ENCODE measurements at regions of chr5 and their contacts with region 1.

Region 1: DNA sequence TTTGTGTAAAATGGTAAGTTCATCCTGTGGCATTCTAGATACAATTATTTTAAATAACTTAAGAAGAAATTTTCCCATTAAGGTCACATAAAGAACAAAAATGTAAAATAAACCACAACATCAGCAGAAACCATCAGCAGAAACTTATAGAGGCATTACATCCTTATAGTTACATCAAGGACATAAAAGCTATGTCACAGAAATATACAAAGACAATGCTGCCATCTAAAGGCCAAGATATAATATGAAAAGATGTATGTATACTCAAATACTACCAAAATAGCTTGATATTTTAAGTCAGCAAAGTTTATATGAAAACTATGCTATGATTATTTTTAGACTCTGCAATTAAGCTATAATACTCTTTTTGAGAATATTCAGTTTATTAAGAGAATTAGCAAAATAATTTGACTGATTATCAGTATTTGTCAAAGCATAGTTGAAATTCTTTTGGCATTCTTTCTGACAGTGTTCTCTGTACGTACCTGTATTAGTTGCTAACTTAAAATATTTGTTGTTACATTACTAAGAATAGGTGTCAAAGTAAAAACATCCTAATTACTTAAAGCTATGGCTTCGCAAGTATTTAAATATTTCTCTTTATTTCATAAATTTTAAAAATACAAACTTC is 36.2 kb downstream of the FBXL17 start:
- DNase-seq: peak in 1 of 2 experiments; percentile 51
- H3K4me3 ChIP-seq: no peak overlapping the region
- H3K27ac ChIP-seq: no peak overlapping the region
- H3K4me1 ChIP-seq: no peaks in the 10 kb centered on the region
- H3K27me3 ChIP-seq: no peaks in the 10 kb centered on the region
- CTCF ChIP-seq: peak; percentile 70

Region 2: DNA sequence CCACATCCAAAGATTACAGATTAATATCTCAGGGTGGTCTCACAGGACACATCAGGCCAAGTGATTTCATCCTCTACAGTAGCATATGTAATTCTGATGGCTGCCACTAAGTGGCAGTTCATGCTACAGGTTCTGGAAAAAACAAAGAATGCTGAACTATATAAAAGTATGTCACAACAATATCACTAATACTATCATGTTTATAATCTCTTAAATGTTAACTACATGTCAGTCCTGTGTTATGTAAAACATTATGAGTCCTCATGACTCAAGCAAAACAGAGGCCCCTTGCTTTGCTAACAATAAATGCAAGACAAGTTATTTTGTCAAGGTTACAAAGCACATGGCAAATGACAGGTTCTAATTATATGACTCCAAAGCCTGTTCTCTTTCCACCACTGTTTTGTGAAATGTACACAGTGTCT is 196.9 kb before region 1 on chr5:
- CTCF ChIA-PET with region 1: no interaction called
- POLR2A ChIA-PET with region 1: no interaction called
- intact Hi-C with region 1: loop called (anchors 5 kb)
- DNase-seq: peak in 1 of 2 experiments; percentile 44
- H3K4me3 ChIP-seq: no peak overlapping the region
- H3K27ac ChIP-seq: no peak overlapping the region
- H3K4me1 ChIP-seq: no peaks in the 10 kb centered on the region
- H3K27me3 ChIP-seq: no peaks in the 10 kb centered on the region
- CTCF ChIP-seq: peak; percentile 63

Region 3: GRCh38 chr5:108260117-108260857 is 85.4 kb before region 1 on chr5:
- CTCF ChIA-PET with region 1: interaction called, 7 read pairs
- POLR2A ChIA-PET with region 1: no interaction called
- intact Hi-C with region 1: loop called (anchors 2 kb)
- DNase-seq: peak; percentile 43 to 50
- H3K4me3 ChIP-seq: no peak overlapping the region
- H3K27ac ChIP-seq: no peak overlapping the region
- H3K4me1 ChIP-seq: no peaks in the 10 kb centered on the region
- H3K27me3 ChIP-seq: no peaks in the 10 kb centered on the region
- CTCF ChIP-seq: peak; percentile 86

Region 4: GRCh38 chr5:108381954-108382783 is 36.5 kb after region 1 on chr5 and contains the start of gene FBXL17:
- CTCF ChIA-PET with region 1: no interaction called
- POLR2A ChIA-PET with region 1: no interaction called
- intact Hi-C with region 1: no loop called
- DNase-seq: peak; percentile 86 to 93
- H3K4me3 ChIP-seq: peak within 1 kb of the TSS; percentile 77
- H3K27ac ChIP-seq: peak within 1 kb of the TSS; percentile 68
- H3K4me1 ChIP-seq: peaks cover 41% of the 10 kb centered on the region
- H3K27me3 ChIP-seq: no peaks in the 10 kb centered on the region
- CTCF ChIP-seq: no peak
- total RNA-seq, gene FBXL17: 14.7 and 19.5 TPM in 2 replicates